ENCODE measurements at regions of chr15 and their contacts with region 1.

Region 1: GRCh38 chr15:94119923-94120775 is 111.2 kb upstream of the MCTP2 start:
- DNase-seq: peak; percentile 62
- H3K4me3 ChIP-seq: peak overlapping the region in 1 of 2 experiments; percentile 18; a peak in 1 of 4 replicates
- H3K27ac ChIP-seq: peak overlapping the region in 1 of 2 experiments; percentile 17; a peak in 1 of 4 replicates
- H3K4me1 ChIP-seq: peaks cover 0 to 10% of the 10 kb centered on the region in 2 experiments; a peak in 1 of 4 replicates
- H3K27me3 ChIP-seq: no peaks in the 10 kb centered on the region
- CTCF ChIP-seq: peak; percentile 100
- EP300 ChIP-seq: no peak
- RAD21 ChIP-seq: peak; percentile 100

Region 2: GRCh38 chr15:92797168-92797951 is 1322.8 kb before region 1 on chr15:
- CTCF ChIA-PET with region 1: interaction called, 19 read pairs
- POLR2A ChIA-PET with region 1: no interaction called
- DNase-seq: peak; percentile 62
- H3K4me3 ChIP-seq: no peak overlapping the region
- H3K27ac ChIP-seq: peak overlapping the region in 1 of 2 experiments; percentile 27; a peak in 1 of 4 replicates
- H3K4me1 ChIP-seq: no peaks in the 10 kb centered on the region
- H3K27me3 ChIP-seq: no peaks in the 10 kb centered on the region
- CTCF ChIP-seq: peak; percentile 80
- EP300 ChIP-seq: no peak
- RAD21 ChIP-seq: peak; percentile 80

Region 3: DNA sequence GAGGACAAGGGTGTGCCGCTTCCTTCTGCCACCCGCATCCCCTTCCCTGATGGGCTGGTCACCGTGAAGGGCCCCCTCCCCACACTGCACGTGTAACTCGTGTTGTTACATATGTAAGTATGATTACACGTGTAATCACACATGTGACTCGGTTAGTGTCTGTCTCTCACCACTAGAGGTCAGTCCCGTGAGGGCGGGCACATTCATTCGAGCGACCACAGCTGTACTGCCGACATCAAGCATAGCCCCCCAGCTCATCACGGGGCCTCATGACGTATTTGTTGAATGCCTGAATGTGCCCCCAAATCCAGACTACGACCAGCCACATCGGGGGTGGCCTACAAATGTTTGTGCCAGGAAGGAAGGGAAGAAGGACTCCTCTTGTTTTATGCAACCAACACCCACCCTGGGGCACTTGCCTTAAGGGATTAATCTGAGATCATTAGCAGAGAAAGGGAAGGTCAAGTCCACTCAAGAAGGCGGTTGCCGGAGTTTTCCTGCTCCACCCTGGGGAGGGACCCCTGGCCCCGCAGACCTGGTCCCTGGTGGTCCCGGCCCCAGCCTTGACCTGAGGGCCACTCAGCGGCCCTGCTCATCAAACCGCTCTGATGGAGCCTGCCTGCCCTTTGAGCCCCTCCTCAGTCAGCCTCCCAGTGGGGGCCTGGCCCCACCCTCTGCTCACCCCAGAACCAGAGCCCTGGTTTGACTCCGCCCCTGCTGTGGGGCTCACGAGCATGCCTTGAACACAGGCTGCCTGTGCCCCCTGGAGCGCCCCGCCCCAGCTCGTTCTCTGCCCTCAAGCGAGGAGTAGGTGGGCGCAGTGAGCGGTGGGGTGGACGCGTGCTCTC is 1084.0 kb before region 1 on chr15:
- CTCF ChIA-PET with region 1: interaction called, 191 read pairs
- POLR2A ChIA-PET with region 1: no interaction called
- DNase-seq: peak; percentile 69
- H3K4me3 ChIP-seq: no peak overlapping the region
- H3K27ac ChIP-seq: no peak overlapping the region
- H3K4me1 ChIP-seq: peaks cover 0 to 8% of the 10 kb centered on the region in 2 experiments; a peak in 1 of 4 replicates
- H3K27me3 ChIP-seq: no peaks in the 10 kb centered on the region
- CTCF ChIP-seq: peak; percentile 54
- EP300 ChIP-seq: no peak
- RAD21 ChIP-seq: peak; percentile 47

Region 4: GRCh38 chr15:93087825-93088199 is 1032.3 kb before region 1 on chr15:
- CTCF ChIA-PET with region 1: interaction called, 78 read pairs
- POLR2A ChIA-PET with region 1: no interaction called
- DNase-seq: peak; percentile 81
- H3K4me3 ChIP-seq: peak overlapping the region; percentile 40 to 60
- H3K27ac ChIP-seq: no peak overlapping the region
- H3K4me1 ChIP-seq: peaks cover 0 to 8% of the 10 kb centered on the region in 2 experiments; a peak in 1 of 4 replicates
- H3K27me3 ChIP-seq: peaks cover 45% of the 10 kb centered on the region; the same call in 1 of the 2 replicates
- CTCF ChIP-seq: peak; percentile 92
- EP300 ChIP-seq: no peak
- RAD21 ChIP-seq: peak; percentile 85

Region 5: GRCh38 chr15:93997084-93997918 is 122.8 kb before region 1 on chr15:
- CTCF ChIA-PET with region 1: interaction called, 35 read pairs
- POLR2A ChIA-PET with region 1: no interaction called
- DNase-seq: peak; percentile 41
- H3K4me3 ChIP-seq: no peak overlapping the region
- H3K27ac ChIP-seq: no peak overlapping the region
- H3K4me1 ChIP-seq: peaks cover 0 to 13% of the 10 kb centered on the region in 2 experiments; a peak in 2 of 4 replicates
- H3K27me3 ChIP-seq: no peaks in the 10 kb centered on the region
- CTCF ChIP-seq: peak; percentile 85
- EP300 ChIP-seq: no peak
- RAD21 ChIP-seq: peak; percentile 73

Region 6: GRCh38 chr15:94107652-94108051 is 12.5 kb before region 1 on chr15:
- CTCF ChIA-PET with region 1: interaction called, 22 read pairs
- POLR2A ChIA-PET with region 1: no interaction called
- DNase-seq: no peak
- H3K4me3 ChIP-seq: no peak overlapping the region
- H3K27ac ChIP-seq: no peak overlapping the region
- H3K4me1 ChIP-seq: no peaks in the 10 kb centered on the region
- H3K27me3 ChIP-seq: no peaks in the 10 kb centered on the region
- CTCF ChIP-seq: no peak
- EP300 ChIP-seq: no peak
- RAD21 ChIP-seq: no peak

Measured in SK-N-SH (cell line).